Spleen (tissue), 13 donors: ENCODE measurements at regions of chrX and their contacts with region 1.

Region 1: GRCh38 chrX:107654872-107655761 is 26.8 kb downstream of the PRPS1 start:
- DNase-seq: peak; percentile 89
- H3K4me3 ChIP-seq: peak overlapping the region in 1 of 8 donors; percentile 31
- H3K27ac ChIP-seq: peak overlapping the region in 2 of 8 donors; percentile 30 to 32
- H3K4me1 ChIP-seq: peaks cover 0 to 18% (median 3%) of the 10 kb centered on the region in 6 donors
- H3K27me3 ChIP-seq: peaks cover 0 to 13% (median 0%) of the 10 kb centered on the region in 7 donors
- CTCF ChIP-seq: peak; percentile 20 to 80 (median 72)
- POLR2A ChIP-seq: no peak

Region 2: DNA sequence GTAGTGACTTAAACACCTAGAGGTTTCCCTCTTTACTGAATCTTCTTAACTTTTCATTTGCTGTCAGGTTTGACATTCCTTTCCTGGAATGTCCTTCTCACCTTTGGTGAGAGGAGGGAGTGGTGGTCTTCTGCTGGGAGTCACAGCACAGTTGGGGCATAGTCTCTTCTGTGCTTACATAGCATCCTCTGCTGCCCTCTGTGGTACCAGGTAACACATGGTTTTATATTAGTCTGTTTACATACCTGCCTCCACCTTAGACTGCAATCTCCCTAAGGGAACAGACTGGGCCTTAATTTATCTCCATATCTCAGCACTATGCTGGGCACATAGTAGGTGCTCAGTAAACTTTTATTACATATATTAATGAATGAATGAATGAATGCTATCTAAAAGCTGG is 145.5 kb before region 1 on chrX:
- intact Hi-C with region 1: no loop called
- DNase-seq: no peak
- H3K4me3 ChIP-seq: no peak overlapping the region
- H3K27ac ChIP-seq: no peak overlapping the region
- H3K4me1 ChIP-seq: no peaks in the 10 kb centered on the region
- H3K27me3 ChIP-seq: peaks cover 0 to 48% (median 22%) of the 10 kb centered on the region in 7 donors
- CTCF ChIP-seq: no peak
- POLR2A ChIP-seq: no peak

Region 3: GRCh38 chrX:107776649-107777535 is 121.8 kb after region 1 on chrX:
- intact Hi-C with region 1: loop called (anchors 5 kb)
- DNase-seq: peak; percentile 86
- H3K4me3 ChIP-seq: peak overlapping the region in 6 of 8 donors; percentile 35 to 72 (median 46)
- H3K27ac ChIP-seq: peak overlapping the region in 6 of 8 donors; percentile 26 to 82 (median 74)
- H3K4me1 ChIP-seq: peaks cover 0 to 30% (median 9%) of the 10 kb centered on the region in 6 donors
- H3K27me3 ChIP-seq: peaks cover 0 to 32% (median 17%) of the 10 kb centered on the region in 7 donors
- CTCF ChIP-seq: peak; percentile 65 to 89 (median 85)
- POLR2A ChIP-seq: no peak